ENCODE measurements at regions of chr20 and their contacts with region 1.

Region 1: DNA sequence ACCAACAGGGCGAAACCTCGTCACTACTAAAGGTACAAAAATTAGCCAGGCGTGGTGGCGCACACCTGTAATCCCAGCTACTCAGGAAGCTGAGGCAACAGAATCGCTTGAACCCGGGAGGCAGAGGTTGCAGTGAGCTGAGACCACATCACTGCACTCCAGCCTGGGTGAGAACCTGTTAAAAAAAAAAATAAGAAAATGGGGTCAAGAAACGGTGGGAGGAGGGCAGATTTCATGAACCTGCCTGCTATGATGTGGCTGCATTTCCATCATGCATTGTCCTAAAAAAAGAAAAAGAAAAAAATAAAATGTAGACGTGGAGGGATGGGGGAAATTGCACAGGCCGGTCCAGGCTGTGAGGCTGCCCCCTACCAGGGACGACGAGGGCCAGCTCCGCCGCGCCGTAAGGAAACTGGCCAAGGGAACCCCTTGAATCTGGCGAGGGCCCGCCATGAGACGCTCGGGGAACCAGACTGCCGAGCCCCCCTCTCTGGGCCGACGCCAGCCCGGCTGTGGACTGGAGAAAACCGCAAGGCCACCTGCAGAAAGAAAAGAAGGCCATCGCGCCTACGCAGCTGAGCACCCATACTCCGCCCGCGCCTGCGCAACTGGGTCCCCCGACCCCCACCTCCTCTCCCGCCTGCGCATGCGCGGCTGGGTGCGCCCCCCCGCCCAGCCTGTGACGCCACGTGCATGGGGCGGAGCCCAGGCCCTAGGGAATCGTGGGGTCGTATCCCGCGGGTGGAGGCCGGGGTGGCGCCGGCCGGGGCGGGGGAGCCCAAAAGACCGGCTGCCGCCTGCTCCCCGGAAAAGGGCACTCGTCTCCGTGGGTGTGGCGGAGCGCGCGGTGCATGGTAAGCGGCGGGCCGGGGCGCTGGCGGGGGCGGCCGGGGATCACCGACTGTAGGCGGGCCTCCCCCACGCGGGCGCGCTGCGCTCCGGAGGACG is at the start of gene ENTPD6:
- DNase-seq: peak; percentile 77 to 96 (median 92)

Region 2: DNA sequence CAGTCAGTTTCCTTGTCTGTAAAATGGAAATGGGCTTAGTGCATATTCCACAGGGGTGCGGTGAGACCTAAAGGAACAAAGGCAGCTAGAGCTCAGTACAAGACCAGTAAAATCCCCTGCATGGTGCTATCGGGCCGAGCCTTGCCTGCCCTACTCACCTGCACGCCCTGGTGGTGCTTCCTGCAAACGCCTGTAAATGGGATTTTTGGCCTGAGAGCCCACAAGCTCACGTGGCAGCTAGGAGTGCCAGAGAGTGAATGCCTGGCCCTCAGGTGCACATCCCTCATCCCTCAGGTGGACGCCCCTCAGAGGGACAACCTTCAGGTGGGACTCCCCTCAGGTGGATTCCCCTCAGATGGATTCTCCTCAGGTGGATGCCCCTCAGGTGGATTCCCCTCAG is 65.4 kb before region 1 on chr20:
- intact Hi-C with region 1: no loop called
- DNase-seq: no peak

Region 3: GRCh38 chr20:25247956-25248785 is 52.9 kb after region 1 on chr20 and contains the start of gene PYGB:
- intact Hi-C with region 1: loop called (anchors 5 kb)
- DNase-seq: peak; percentile 34 to 90 (median 82)

Region 4: DNA sequence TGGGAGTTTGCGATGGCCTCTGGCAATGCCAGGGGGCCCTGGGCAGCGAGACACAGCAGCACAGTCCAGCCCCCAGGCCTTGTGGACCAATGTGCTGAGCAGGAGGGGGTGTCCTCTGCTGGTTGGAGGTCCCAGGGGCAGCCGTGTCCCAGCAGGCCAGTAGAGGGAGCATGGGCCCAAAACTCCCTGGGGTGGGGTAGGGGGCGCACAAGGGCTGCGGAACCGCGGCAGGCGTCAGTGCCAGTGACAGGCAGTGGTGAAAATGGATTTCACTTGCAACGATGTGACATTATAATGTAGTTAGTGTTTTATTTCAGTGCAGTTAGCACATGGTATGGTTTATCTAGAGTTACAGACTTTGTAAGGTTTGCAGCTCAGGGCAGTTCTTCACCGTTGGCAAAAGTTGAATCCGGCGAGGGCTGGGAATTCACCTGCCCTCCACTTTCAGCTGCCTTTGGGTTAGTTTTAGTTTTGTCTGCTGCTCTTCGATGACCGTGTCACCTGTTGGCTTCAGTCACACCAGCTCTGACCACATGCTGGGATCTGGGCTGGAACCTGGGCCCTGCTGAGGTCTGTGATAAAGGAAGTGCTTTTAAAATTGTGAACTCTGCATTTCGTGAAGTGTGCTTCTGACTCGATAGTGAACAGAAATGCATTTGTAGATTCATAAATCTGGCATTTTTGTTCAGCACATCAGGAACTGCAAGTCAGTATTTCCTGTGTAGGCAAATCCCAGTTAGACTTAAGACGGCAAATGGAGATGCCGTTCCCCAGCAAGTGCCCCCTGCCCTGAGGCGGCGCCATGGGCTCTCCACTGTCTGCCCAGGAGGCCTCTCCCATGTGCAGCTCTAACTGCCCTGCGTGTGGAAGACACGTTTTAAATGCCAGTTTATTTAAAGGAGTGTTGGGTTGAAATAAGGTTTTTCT is 99.4 kb after region 1 on chr20:
- intact Hi-C with region 1: loop called (anchors 10 kb)
- DNase-seq: peak; percentile 54 to 91 (median 80)